ENCODE measurements at regions of chr18 and their contacts with region 1.

Region 1: GRCh38 chr18:35756506-35757117 is 175.1 kb downstream of the GALNT1 start:
- DNase-seq: peak; percentile 47
- H3K4me3 ChIP-seq: no peak overlapping the region
- H3K27ac ChIP-seq: no peak overlapping the region
- H3K4me1 ChIP-seq: peaks cover 19% of the 10 kb centered on the region
- H3K27me3 ChIP-seq: no peaks in the 10 kb centered on the region
- CTCF ChIP-seq: peak; percentile 54 to 68

Region 2: DNA sequence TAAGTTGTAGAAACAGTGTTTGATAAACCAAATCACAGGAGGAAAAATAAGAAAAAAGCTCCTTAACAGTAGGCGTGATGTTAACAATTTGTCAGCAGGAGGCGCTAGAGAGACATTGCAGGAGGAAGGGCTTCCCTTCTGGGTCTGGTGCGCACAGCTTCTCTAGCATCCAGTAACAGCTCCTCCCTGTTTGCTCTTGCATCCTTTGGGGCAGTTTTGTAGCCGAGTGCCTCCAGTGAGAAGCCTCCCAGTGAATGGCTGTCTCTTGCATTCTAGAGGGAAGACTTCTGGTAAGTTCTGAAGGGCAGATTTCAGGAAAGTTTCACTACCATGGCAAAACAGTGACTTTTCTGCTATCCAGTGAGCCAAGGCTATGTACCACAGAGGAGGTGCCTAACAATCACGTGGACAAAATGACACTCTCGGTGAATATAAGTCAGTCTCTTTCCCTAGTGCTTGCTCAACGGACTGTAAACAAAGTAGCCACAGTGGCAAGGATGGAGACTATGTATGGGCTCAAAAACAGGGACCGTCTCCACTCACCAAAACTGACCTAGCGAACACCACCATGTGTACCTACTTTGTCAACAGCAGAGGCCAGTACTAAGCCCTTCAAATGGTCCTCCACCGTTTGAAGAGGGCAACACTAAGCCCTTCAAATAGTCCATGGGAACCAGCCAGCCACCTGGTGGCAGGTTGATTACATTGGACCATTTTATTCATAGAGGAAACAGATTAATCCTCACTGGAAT is 369.8 kb before region 1 on chr18:
- CTCF ChIA-PET with region 1: no interaction called
- dilution Hi-C with region 1: no loop called
- in situ Hi-C with region 1: no loop called
- intact Hi-C with region 1: loop called (anchors 5 kb)
- DNase-seq: peak; percentile 61
- H3K4me3 ChIP-seq: no peak overlapping the region
- H3K27ac ChIP-seq: no peak overlapping the region
- H3K4me1 ChIP-seq: no peaks in the 10 kb centered on the region
- H3K27me3 ChIP-seq: no peaks in the 10 kb centered on the region
- CTCF ChIP-seq: peak; percentile 92 to 96

Region 3: GRCh38 chr18:35736696-35737095 is 19.9 kb before region 1 on chr18:
- CTCF ChIA-PET with region 1: no interaction called
- dilution Hi-C with region 1: no loop called
- in situ Hi-C with region 1: no loop called
- intact Hi-C with region 1: no loop called
- DNase-seq: no peak
- H3K4me3 ChIP-seq: no peak overlapping the region
- H3K27ac ChIP-seq: no peak overlapping the region
- H3K4me1 ChIP-seq: no peaks in the 10 kb centered on the region
- H3K27me3 ChIP-seq: no peaks in the 10 kb centered on the region
- CTCF ChIP-seq: no peak

Region 4: DNA sequence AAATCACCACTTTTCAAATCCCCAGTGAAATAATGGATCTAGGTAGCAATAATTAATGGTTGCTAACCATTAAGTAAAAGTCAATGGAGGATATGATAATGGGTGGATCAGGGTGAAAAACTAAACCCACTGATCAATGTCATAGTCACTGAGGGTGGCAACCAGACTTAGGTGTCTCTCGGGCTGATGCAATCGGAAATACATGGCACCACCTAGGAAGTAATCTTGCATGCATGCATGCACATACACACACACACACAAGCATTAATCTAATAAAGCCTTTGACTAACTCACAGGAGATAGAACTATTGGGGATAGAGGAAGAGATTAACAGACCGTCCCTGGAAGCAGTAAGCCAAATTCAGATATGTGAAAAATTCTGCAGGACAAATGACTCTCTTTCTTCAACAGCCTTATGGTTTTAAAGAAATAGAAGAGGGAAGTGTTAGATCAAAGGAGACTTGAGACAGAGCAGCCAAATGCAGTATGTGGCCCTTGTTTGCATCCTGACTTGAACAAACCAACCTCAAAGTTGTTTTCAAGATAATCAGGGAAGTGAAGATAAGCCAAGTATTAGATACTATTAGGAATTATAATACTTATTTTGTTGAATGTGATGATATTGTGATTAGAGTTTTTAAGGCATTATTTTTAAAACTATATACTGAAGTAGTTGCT is 29.9 kb after region 1 on chr18:
- CTCF ChIA-PET with region 1: no interaction called
- dilution Hi-C with region 1: no loop called
- in situ Hi-C with region 1: no loop called
- intact Hi-C with region 1: no loop called
- DNase-seq: no peak
- H3K4me3 ChIP-seq: no peak overlapping the region
- H3K27ac ChIP-seq: no peak overlapping the region
- H3K4me1 ChIP-seq: peaks cover 8% of the 10 kb centered on the region
- H3K27me3 ChIP-seq: no peaks in the 10 kb centered on the region
- CTCF ChIP-seq: no peak

Region 5: DNA sequence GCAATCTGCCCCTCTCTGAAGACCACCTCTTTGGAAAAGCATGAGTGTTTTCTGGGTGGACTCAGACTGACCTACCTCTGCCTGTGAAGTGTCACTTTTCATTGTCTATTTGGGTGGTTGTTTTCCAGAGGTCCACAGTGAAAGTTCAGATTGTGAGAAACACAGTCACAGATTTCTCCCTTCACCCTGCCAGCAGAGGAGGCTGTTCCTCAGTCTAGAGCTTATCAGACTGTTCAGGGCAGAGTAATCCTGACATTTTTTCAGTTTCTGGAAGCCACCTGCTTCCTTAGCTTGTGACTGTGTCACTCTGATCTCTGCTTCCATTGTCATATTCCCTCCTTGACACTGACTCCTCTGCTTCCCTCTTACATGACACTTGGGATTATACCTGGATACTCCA is 160.4 kb after region 1 on chr18:
- CTCF ChIA-PET with region 1: no interaction called
- dilution Hi-C with region 1: no loop called
- in situ Hi-C with region 1: no loop called
- intact Hi-C with region 1: loop called (anchors 1 kb)
- DNase-seq: peak; percentile 12
- H3K4me3 ChIP-seq: no peak overlapping the region
- H3K27ac ChIP-seq: no peak overlapping the region
- H3K4me1 ChIP-seq: peaks cover 10% of the 10 kb centered on the region
- H3K27me3 ChIP-seq: no peaks in the 10 kb centered on the region
- CTCF ChIP-seq: peak; percentile 54 to 88

Region 6: DNA sequence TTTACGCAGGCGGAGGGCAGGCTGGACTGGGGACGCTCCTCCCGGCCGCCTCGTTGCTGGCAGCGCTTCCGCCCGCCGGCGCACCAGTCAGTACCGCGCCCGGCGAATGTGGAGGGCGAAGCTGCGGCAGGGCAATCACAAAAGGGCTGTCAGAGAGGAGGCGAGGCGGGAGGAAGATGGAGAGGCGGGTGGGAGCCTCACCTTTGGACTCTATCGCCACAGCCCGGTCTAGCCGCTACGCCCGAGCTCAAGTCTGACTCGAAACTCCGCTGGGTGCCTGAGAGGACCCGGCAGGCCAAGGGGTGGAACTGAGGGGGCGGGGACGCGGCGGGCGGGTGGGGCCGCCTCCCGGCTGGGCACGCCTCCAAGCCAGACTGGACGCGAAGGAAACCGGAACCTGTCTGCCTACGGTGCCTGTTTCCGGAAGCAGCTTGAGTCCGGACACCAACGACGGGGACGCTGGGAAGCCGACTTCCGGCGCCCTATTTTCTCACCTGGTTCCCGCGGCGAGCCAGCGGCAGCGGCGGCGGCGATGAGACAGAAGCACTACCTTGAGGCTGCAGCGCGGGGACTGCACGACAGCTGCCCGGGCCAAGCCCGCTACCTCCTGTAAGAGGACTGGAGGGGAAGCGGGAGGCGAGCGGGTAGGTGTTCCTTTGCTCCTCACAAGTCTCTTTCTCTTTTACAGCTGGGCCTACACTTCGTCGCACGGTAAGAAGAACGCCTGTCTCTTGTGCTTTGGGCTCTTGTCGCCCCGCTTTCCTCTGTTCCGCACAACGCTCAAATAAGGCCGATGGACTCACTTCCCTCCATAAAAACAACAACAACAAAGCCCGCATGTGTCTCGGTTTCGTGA is 215.8 kb after region 1 on chr18 and contains the start of gene RMP24:
- CTCF ChIA-PET with region 1: no interaction called
- dilution Hi-C with region 1: no loop called
- in situ Hi-C with region 1: no loop called
- intact Hi-C with region 1: loop called (anchors 5 kb)
- DNase-seq: peak; percentile 95
- H3K4me3 ChIP-seq: peak within 1 kb of the TSS; percentile 58 to 80 (median 73)
- H3K27ac ChIP-seq: peak within 1 kb of the TSS; percentile 79
- H3K4me1 ChIP-seq: peaks cover 44% of the 10 kb centered on the region
- H3K27me3 ChIP-seq: no peaks in the 10 kb centered on the region
- CTCF ChIP-seq: no peak

Region 7: GRCh38 chr18:36086186-36086585 is 329.6 kb after region 1 on chr18:
- CTCF ChIA-PET with region 1: no interaction called
- dilution Hi-C with region 1: no loop called
- in situ Hi-C with region 1: no loop called
- intact Hi-C with region 1: loop called (anchors 5 kb)
- DNase-seq: no peak
- H3K4me3 ChIP-seq: no peak overlapping the region
- H3K27ac ChIP-seq: no peak overlapping the region
- H3K4me1 ChIP-seq: peaks cover 17% of the 10 kb centered on the region
- H3K27me3 ChIP-seq: no peaks in the 10 kb centered on the region
- CTCF ChIP-seq: no peak

Region 8: GRCh38 chr18:36296650-36297416 is 540.2 kb after region 1 on chr18:
- CTCF ChIA-PET with region 1: no interaction called
- dilution Hi-C with region 1: no loop called
- in situ Hi-C with region 1: loop called in 1 of 2 experiments (anchors 25 kb)
- intact Hi-C with region 1: no loop called
- DNase-seq: peak; percentile 57
- H3K4me3 ChIP-seq: peak overlapping the region; percentile 47 to 78 (median 78)
- H3K27ac ChIP-seq: peak overlapping the region; percentile 26
- H3K4me1 ChIP-seq: peaks cover 31% of the 10 kb centered on the region
- H3K27me3 ChIP-seq: no peaks in the 10 kb centered on the region
- CTCF ChIP-seq: peak in 1 of 2 donors; percentile 41